A549 (cell line): ENCODE measurements at regions of chr7 and their contacts with region 1.

Region 1: GRCh38 chr7:28926871-28927597 is 31.1 kb downstream of the TRIL start:
- DNase-seq: peak; percentile 68 to 81
- ATAC-seq: peak; percentile 91 to 93
- H3K4me3 ChIP-seq: peak overlapping the region; percentile 53
- H3K27ac ChIP-seq: peak overlapping the region; percentile 47 to 52; a peak in 5 of 6 replicates
- H3K4me1 ChIP-seq: 0 out of 3 replicates have a peak, but pooled peaks cover 2% of the 10 kb centered on the region
- CTCF ChIP-seq: peak; percentile 87
- EP300 ChIP-seq: no peak
- POLR2A ChIP-seq: no peak
- RAD21 ChIP-seq: peak; percentile 64 to 69

Region 2: GRCh38 chr7:28904578-28905048 is 22.4 kb before region 1 on chr7:
- CTCF ChIA-PET with region 1: interaction called, 83 read pairs
- POLR2A ChIA-PET with region 1: no interaction called
- DNase-seq: no peak
- ATAC-seq: no peak
- H3K4me3 ChIP-seq: no peak overlapping the region
- H3K27ac ChIP-seq: no peak overlapping the region
- H3K4me1 ChIP-seq: no peaks in the 10 kb centered on the region
- CTCF ChIP-seq: no peak
- EP300 ChIP-seq: no peak
- POLR2A ChIP-seq: no peak
- RAD21 ChIP-seq: no peak

Region 3: DNA sequence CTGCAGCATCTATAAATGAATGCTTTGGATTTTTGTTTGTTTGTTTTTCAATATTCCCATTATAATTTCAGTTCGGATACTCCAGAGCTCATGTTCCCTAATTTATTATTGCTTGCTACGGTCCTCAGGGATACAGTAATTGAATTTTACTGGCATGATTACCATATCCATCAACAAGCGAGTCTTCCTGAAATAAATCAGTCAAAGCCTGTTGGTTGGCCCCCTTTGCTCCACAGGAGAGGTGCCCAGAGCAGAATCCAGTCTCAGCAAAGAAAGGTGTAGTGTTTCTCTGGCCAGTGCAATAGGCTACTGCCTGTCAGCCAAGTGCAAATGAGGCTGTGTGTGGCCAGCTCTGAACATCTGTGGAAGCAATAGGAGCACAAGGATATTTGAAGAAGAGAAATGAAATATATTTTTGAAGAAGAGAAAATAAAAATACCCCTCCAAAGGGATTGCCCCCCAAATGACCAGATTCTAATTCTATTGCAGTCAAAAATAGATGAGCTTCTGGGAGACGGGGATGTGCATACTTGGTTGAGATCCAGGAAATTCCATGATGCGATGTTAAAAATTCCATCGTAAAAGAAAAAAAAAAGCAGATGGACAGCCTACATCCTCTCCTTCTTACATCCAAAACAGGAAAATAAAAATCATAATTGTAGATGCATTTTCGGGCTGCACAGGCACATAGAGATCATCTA is 13.0 kb after region 1 on chr7:
- CTCF ChIA-PET with region 1: interaction called, 46 read pairs
- POLR2A ChIA-PET with region 1: no interaction called
- DNase-seq: no peak
- ATAC-seq: no peak
- H3K4me3 ChIP-seq: no peak overlapping the region
- H3K27ac ChIP-seq: no peak overlapping the region
- H3K4me1 ChIP-seq: no peaks in the 10 kb centered on the region
- CTCF ChIP-seq: no peak
- EP300 ChIP-seq: no peak
- POLR2A ChIP-seq: no peak
- RAD21 ChIP-seq: no peak

Region 4: DNA sequence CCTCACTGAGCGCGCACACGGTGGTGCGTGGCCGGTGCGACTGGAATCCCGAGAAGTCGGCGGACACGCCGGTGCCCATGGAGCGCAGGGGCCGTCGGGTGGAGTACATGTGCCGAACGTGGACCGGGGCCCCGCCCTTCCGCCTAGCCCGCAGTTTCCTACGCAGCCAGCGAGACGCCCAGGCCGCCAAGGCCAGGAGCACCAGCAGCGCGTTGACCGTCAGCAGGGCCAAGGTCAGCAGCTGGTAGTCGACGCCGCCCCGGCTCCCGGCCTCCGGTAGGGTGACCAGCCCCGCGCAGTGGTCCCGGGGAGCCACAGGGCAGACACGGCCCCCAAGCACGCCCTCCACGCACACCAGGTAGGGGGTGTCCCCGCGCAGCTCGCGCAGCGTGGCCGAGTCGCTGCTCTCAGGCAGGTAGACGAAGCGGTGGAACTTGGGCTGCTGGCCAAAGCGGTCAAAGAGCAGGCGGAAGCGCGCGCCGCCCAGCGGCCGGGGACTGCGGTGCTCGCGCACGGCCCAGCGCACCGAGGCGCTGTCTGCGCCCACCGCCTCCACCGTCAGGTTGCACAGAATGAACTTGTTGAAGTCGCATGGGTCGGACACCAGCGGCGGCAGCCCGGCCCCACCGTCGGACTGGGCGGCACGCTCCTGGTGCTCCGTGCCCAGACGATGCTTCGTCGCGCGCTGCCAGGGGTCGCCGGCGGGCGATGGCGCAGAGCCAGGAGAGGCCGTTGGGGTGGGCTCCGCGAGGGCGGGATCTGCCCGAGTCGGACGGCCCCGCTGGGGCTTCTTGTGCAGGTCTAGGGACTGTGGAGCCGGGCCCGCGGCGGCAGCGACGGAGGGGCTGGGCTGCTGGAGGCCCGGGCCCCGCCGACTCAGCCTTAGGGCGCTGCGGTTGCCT is 28.9 kb after region 1 on chr7:
- CTCF ChIA-PET with region 1: interaction called, 40 read pairs
- POLR2A ChIA-PET with region 1: no interaction called
- DNase-seq: peak; percentile 33
- ATAC-seq: peak; percentile 59 to 76
- H3K4me3 ChIP-seq: peak overlapping the region; percentile 47
- H3K27ac ChIP-seq: peak overlapping the region in 1 of 2 experiments; percentile 54; a peak in 2 of 6 replicates
- H3K4me1 ChIP-seq: peaks cover 4% of the 10 kb centered on the region; the same call in 2 of the 3 replicates
- CTCF ChIP-seq: peak; percentile 33; the same call in 1 of the 3 replicates
- EP300 ChIP-seq: no peak
- POLR2A ChIP-seq: no peak
- RAD21 ChIP-seq: peak in 1 of 2 experiments; percentile 30; a peak in 1 of 5 replicates

Region 5: DNA sequence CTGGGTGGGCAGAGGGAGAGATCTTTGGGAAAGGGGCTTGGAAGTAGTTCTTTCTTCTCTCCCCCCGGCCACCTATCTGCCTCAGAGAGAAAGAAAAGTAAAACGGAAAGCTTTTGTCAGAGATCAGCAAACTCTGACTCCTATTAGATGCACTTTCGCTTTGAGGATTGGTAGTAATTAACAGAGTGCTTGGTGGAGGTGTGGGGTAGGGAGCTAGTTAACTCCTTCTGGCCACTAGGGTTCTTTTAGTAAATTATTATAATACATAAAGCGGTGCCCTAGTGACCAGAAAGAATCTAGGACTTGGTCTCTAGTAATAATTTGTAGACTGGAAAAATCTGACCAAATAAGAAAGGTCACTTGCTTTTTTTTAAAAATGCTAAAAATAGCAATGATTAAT is 164.7 kb after region 1 on chr7:
- CTCF ChIA-PET with region 1: interaction called, 393 read pairs
- POLR2A ChIA-PET with region 1: no interaction called
- DNase-seq: peak in 1 of 2 experiments; percentile 10
- ATAC-seq: no peak
- H3K4me3 ChIP-seq: no peak overlapping the region
- H3K27ac ChIP-seq: no peak overlapping the region
- H3K4me1 ChIP-seq: no peaks in the 10 kb centered on the region
- CTCF ChIP-seq: no peak
- EP300 ChIP-seq: no peak
- POLR2A ChIP-seq: no peak
- RAD21 ChIP-seq: no peak

Region 6: DNA sequence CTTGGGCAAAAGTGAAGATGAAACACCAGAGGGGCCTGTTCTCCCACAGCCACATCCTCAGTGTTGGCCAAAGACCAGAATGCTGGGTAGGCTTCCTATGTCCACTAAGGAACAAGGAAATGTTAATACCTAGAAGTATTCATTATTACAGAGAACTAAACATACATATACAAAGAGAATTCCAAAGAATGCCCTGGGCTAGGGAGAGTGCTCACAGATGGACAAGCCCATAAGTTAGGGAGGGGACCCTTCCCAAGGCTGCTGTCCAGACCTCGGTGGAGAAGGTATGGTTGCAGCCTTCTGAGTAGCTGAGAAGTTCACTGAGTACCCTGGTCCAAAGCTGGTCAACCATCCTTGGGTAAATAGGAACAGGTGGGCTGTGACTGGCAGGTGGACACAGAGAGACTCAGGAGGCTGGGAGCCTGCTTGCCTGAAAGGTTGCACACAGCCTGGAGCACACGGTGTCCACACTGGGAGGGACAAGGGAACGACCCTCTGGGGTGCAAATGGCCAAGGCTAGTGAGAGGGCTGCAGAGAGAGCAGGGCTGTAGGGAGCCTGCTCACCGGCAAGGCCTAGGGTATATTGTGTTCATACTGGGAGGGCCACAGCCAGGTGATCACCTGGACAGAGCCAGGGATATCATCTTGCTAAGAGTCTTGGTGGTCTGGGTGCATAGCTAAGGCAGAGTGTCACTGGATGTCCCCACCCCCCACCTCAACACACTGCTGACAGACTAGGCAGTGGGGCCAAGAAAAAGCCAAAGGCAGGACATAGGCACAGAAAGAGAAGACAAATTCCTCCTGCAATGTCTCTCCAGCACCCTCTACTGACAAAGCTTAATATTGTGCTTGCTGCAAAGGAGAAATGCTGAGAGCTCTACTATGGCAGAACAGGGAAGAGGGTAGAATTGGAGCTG is 179.0 kb after region 1 on chr7:
- CTCF ChIA-PET with region 1: interaction called, 393 read pairs
- POLR2A ChIA-PET with region 1: no interaction called
- DNase-seq: peak in 1 of 2 experiments; percentile 49
- ATAC-seq: peak; percentile 90 to 91
- H3K4me3 ChIP-seq: no peak overlapping the region
- H3K27ac ChIP-seq: no peak overlapping the region
- H3K4me1 ChIP-seq: no peaks in the 10 kb centered on the region
- CTCF ChIP-seq: peak; percentile 63
- EP300 ChIP-seq: no peak
- POLR2A ChIP-seq: no peak
- RAD21 ChIP-seq: peak; percentile 59 to 74